Calu3 (cell line): ENCODE measurements at regions of chr19 and their contacts with region 1.

Region 1: DNA sequence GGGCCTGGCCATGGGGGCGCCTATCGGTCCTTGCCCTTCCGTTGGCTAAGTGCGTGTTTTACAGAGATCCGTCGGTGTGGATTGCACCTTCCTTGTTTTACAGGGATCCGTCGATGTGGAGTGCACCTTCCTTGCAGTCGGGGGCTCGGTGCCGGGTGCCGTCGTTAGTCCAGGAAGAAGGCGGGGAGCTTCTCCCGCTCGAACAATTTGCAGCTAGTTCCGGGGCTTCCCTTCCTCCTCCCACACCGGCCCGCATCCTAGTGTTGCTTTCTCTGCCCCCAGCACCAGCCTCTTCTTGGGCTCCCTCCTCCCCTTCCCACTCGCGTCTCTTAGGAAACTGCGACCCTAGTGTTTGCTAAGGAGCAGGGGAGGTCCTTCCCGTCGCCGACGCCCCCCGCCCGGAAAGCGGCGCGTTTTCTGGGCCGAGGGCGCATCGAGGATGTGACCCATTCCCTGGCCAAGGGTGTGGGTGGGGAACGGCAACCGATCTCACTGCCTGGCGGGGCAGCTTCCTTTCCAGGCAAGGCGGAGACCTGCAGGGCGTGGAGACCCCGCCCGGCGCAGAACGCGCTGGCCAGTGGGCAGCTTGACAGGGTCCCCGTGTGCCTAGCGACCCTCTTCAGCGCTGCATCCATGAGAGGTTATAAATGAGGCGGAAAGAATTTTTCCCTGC is 75.7 kb upstream of the ZNF91 start:
- DNase-seq: no peak
- H3K4me3 Mint-ChIP-seq: no peak overlapping the region
- H3K27ac Mint-ChIP-seq: no peak overlapping the region
- H3K4me1 Mint-ChIP-seq: no peaks in the 10 kb centered on the region
- H3K27me3 Mint-ChIP-seq: no peaks in the 10 kb centered on the region
- CTCF ChIP-seq: no peak

Region 2: GRCh38 chr19:23321948-23322549 is 149.0 kb before region 1 on chr19:
- CTCF ChIA-PET with region 1: no interaction called
- intact Hi-C with region 1: loop called (anchors 5 kb)
- DNase-seq: no peak
- H3K4me3 Mint-ChIP-seq: no peak overlapping the region
- H3K27ac Mint-ChIP-seq: no peak overlapping the region
- H3K4me1 Mint-ChIP-seq: no peaks in the 10 kb centered on the region
- H3K27me3 Mint-ChIP-seq: no peaks in the 10 kb centered on the region
- CTCF ChIP-seq: no peak